ENCODE measurements at regions of chr9 and their contacts with region 1.

Region 1: DNA sequence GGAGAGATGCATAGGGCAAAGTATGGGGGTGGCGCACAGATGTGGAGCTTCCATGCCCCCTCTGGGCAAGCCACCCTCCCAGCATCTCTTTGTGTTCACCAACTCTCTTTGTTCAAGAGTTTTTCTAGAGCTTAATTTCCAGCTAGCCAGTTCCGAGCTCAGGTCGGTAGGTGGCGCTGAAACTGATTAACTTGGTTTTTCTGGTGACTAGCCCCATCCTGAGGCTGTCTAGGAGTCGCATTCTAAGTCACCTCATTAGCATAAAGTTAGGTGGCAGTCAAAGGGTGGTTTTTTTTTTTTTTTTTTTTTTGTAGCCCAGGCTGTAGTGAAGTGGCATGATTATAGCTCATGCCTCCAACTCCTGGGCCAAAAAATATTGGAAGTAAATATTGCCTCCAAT is 476.4 kb downstream of the KDM4C start:
- DNase-seq: peak; percentile 67
- H3K4me3 ChIP-seq: no peak overlapping the region
- H3K27ac ChIP-seq: no peak overlapping the region
- H3K4me1 ChIP-seq: no peaks in the 10 kb centered on the region
- H3K27me3 ChIP-seq: peaks cover 13% of the 10 kb centered on the region
- CTCF ChIP-seq: peak; percentile 72

Region 2: GRCh38 chr9:6977761-6978160 is 256.4 kb before region 1 on chr9:
- CTCF ChIA-PET with region 1: interaction called, 10 read pairs
- POLR2A ChIA-PET with region 1: no interaction called
- intact Hi-C with region 1: no loop called
- DNase-seq: no peak
- H3K4me3 ChIP-seq: no peak overlapping the region
- H3K27ac ChIP-seq: no peak overlapping the region
- H3K4me1 ChIP-seq: no peaks in the 10 kb centered on the region
- H3K27me3 ChIP-seq: no peaks in the 10 kb centered on the region
- CTCF ChIP-seq: no peak

Region 3: GRCh38 chr9:7223981-7224380 is 10.2 kb before region 1 on chr9:
- CTCF ChIA-PET with region 1: interaction called, 12 read pairs
- POLR2A ChIA-PET with region 1: no interaction called
- intact Hi-C with region 1: no loop called
- DNase-seq: no peak
- H3K4me3 ChIP-seq: no peak overlapping the region
- H3K27ac ChIP-seq: no peak overlapping the region
- H3K4me1 ChIP-seq: no peaks in the 10 kb centered on the region
- H3K27me3 ChIP-seq: peaks cover 19% of the 10 kb centered on the region
- CTCF ChIP-seq: no peak

Region 4: DNA sequence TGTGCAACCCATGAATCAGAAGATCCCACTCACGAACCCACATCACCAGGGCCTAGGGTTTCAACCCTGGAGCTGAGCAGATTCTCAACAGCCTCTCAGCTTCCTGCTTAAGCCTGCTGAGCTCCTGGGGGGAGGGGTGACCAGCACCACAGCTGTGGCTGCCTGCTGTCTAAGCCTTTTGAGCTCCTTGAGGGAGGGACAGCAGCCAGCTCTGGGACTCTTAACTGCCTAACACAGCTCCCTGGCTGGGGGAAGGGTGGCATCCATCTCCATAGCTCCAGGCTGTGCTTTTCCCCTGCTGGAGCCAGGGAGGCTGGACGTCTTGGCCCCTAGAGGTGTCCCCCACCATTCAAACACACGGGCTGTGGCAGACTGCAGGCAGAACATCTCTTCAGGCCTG is 315.1 kb after region 1 on chr9:
- CTCF ChIA-PET with region 1: no interaction called
- POLR2A ChIA-PET with region 1: no interaction called
- intact Hi-C with region 1: no loop called
- DNase-seq: peak; percentile 82
- H3K4me3 ChIP-seq: no peak overlapping the region
- H3K27ac ChIP-seq: no peak overlapping the region
- H3K4me1 ChIP-seq: no peaks in the 10 kb centered on the region
- H3K27me3 ChIP-seq: peaks cover 2% of the 10 kb centered on the region
- CTCF ChIP-seq: no peak